PC-3 (cell line): ENCODE measurements at regions of chrX and their contacts with region 1.

Region 1: GRCh38 chrX:140762061-140762460 is 52.5 kb downstream of the LINC00632 start:
- DNase-seq: peak; percentile 73
- ATAC-seq: peak; percentile 50
- H3K4me3 ChIP-seq: no peak overlapping the region
- H3K27ac ChIP-seq: no peak overlapping the region
- H3K4me1 ChIP-seq: no peaks in the 10 kb centered on the region; the same call in 1 of the 2 replicates
- H3K27me3 ChIP-seq: no peaks in the 10 kb centered on the region
- CTCF ChIP-seq: peak; percentile 84

Region 2: GRCh38 chrX:140548985-140549384 is 213.1 kb before region 1 on chrX:
- CTCF ChIA-PET with region 1: no interaction called
- POLR2A ChIA-PET with region 1: no interaction called
- intact Hi-C with region 1: no loop called
- DNase-seq: no peak
- ATAC-seq: no peak
- H3K4me3 ChIP-seq: no peak overlapping the region
- H3K27ac ChIP-seq: no peak overlapping the region
- H3K4me1 ChIP-seq: no peaks in the 10 kb centered on the region
- H3K27me3 ChIP-seq: no peaks in the 10 kb centered on the region
- CTCF ChIP-seq: no peak

Region 3: DNA sequence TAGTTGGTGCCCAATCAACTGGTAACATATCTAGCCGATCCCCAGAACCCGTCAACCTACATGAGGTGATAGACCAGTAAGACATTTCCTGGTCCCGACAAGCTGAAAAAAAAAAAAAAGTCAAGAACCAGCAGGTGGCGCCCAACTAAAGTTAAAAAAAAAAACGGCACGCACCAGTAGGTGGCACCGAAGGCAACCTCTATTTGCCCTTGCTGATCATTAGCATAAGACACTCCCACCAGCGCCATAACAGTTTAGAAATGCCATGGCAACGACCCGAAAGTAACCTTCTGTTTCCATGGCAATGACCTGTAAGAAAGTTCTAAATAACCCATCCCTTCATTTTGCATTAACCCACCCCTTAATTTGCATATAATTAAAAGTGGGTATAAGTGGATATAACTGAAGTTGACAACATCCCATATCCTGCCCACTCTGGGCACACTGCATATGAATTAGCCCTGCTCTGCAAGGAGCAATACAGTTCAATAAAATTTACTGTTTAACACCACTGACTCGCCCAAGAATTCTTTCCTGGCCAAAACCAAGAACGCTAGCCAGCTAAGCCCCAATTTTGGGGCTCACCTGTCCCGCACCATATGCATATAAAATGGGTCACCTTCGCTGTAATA is 156.5 kb after region 1 on chrX:
- CTCF ChIA-PET with region 1: interaction called, 8 read pairs
- POLR2A ChIA-PET with region 1: no interaction called
- intact Hi-C with region 1: loop called (anchors 5 kb)
- DNase-seq: peak; percentile 70
- ATAC-seq: peak; percentile 33; the same call in 1 of the 2 replicates
- H3K4me3 ChIP-seq: no peak overlapping the region
- H3K27ac ChIP-seq: no peak overlapping the region
- H3K4me1 ChIP-seq: 0 out of 2 replicates have a peak, but pooled peaks cover 6% of the 10 kb centered on the region
- H3K27me3 ChIP-seq: no peaks in the 10 kb centered on the region
- CTCF ChIP-seq: peak; percentile 86

Region 4: DNA sequence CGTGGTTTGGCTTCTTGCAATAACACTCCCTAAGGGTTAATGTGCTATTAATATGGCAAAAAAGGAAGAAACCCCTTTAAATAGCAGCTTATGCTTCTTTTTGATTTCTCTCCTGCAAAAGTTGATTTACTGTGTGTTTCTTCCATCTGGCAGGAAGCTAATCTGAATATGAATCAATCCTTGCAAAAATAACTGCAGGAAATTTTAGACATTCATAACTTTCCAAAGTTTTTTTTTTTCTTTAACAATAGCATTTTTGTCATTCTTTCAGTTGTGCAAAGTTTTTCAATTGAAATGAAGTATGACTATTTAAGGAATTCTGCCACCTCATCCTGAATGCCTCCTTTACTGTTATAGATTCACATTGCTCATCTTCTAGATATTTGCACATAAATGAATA is 706.9 kb after region 1 on chrX:
- CTCF ChIA-PET with region 1: no interaction called
- POLR2A ChIA-PET with region 1: no interaction called
- intact Hi-C with region 1: loop called (anchors 2 kb)
- DNase-seq: peak; percentile 85
- ATAC-seq: peak; percentile 76
- H3K4me3 ChIP-seq: no peak overlapping the region
- H3K27ac ChIP-seq: peak overlapping the region; percentile 85
- H3K4me1 ChIP-seq: peaks cover 33% of the 10 kb centered on the region
- H3K27me3 ChIP-seq: no peaks in the 10 kb centered on the region
- CTCF ChIP-seq: no peak

Region 5: DNA sequence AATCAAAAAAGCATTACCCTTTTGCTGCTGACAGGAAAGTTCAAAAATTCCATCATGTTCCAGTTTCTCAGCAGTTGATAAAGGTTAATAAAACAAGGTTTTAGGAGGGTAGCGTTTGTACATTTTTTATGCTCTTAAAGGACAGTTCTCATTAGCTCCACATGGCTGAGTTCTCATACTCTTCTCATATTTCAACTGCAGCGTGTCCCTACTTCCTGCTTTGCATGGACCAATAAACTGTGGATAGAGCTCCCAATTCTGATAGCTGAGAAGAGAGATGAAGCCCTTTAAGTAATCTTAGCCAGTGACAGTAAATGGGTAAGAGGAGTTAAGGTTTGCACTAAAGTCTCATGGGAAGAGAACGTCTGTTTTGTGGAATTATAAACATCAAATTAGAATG is 880.9 kb after region 1 on chrX:
- CTCF ChIA-PET with region 1: no interaction called
- POLR2A ChIA-PET with region 1: no interaction called
- intact Hi-C with region 1: loop called (anchors 2 kb)
- DNase-seq: peak; percentile 56
- ATAC-seq: peak; percentile 67
- H3K4me3 ChIP-seq: no peak overlapping the region
- H3K27ac ChIP-seq: no peak overlapping the region
- H3K4me1 ChIP-seq: peaks cover 23% of the 10 kb centered on the region
- H3K27me3 ChIP-seq: no peaks in the 10 kb centered on the region
- CTCF ChIP-seq: no peak

Region 6: DNA sequence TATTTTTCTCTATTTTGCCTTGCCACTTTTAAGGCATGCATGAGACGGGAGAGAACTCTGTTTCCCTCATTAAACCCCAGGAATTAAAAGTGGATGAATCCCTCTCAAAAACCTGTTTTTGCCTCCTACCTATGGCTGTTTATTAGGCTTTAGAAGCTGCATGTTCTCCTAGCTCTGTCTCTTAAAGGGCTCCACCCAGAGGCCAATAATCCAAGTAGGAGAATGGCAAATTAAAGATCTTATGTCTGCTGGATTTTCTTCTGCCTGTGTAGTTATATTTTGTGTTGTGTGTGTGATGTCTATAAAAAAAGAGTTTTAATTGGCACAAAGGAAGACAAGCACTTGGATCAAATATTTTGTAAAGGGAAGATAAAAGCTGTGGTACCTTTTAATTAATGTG is 1174.0 kb after region 1 on chrX:
- CTCF ChIA-PET with region 1: no interaction called
- POLR2A ChIA-PET with region 1: no interaction called
- intact Hi-C with region 1: loop called (anchors 10 kb)
- DNase-seq: peak; percentile 43
- ATAC-seq: no peak
- H3K4me3 ChIP-seq: no peak overlapping the region
- H3K27ac ChIP-seq: no peak overlapping the region
- H3K4me1 ChIP-seq: peaks cover 4% of the 10 kb centered on the region; the same call in 1 of the 2 replicates
- H3K27me3 ChIP-seq: no peaks in the 10 kb centered on the region
- CTCF ChIP-seq: peak; percentile 56

Region 7: GRCh38 chrX:142089198-142089597 is 1327.1 kb after region 1 on chrX:
- CTCF ChIA-PET with region 1: no interaction called
- POLR2A ChIA-PET with region 1: no interaction called
- intact Hi-C with region 1: loop called (anchors 5 kb)
- DNase-seq: peak; percentile 45
- ATAC-seq: peak; percentile 54; the same call in 1 of the 2 replicates
- H3K4me3 ChIP-seq: no peak overlapping the region
- H3K27ac ChIP-seq: no peak overlapping the region
- H3K4me1 ChIP-seq: no peaks in the 10 kb centered on the region
- H3K27me3 ChIP-seq: no peaks in the 10 kb centered on the region
- CTCF ChIP-seq: peak; percentile 68